ENCODE measurements at regions of chr12 and their contacts with region 1.

Region 1: GRCh38 chr12:48512855-48513254 is 12.6 kb upstream of the OR8S1 start:
- DNase-seq: peak; percentile 38
- ATAC-seq: peak; percentile 97
- H3K4me3 ChIP-seq: no peak overlapping the region
- H3K27ac ChIP-seq: no peak overlapping the region
- H3K4me1 ChIP-seq: no peaks in the 10 kb centered on the region
- H3K27me3 ChIP-seq: no peaks in the 10 kb centered on the region
- CTCF ChIP-seq: no peak
- EP300 ChIP-seq: peak in 1 of 2 experiments; percentile 71; a peak in 3 of 4 replicates
- POLR2A ChIP-seq: no peak
- RAD21 ChIP-seq: no peak

Region 2: DNA sequence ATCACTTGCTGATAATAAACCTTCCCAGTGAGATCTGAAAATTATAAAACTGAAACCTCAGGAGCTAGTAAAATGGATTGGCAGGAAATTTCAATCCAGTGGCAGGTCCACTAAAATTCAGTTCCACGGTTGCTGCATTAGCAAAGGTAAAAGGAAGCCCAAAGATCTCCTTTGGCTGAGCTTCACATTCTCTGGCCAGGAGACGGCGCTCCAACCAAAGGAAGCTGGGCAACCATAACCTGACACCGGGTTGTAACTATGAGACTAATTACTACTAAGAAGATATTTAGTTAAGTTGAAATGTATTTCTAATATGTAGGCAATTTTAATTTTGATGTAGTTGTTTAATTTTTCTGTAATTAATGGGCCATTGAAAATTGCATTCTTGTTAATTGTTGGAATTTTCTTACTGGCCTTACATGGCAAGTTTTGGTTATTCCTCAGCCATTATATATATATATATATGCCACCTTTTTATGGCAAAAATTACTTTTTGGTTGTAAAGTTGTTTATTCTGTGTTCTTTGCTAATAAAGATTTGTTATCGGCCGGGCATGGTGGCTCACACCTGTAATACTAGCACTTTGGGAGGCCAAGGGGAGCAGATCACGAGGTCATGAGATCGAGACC is 29.6 kb after region 1 on chr12:
- CTCF ChIA-PET with region 1: interaction called, 4 read pairs
- POLR2A ChIA-PET with region 1: no interaction called
- RAD21 ChIA-PET with region 1: no interaction called
- SMC1A ChIA-PET with region 1: no interaction called
- in situ Hi-C with region 1: no loop called
- intact Hi-C with region 1: loop called (anchors 2 kb)
- DNase-seq: no peak
- ATAC-seq: peak; percentile 75
- H3K4me3 ChIP-seq: no peak overlapping the region
- H3K27ac ChIP-seq: no peak overlapping the region
- H3K4me1 ChIP-seq: 0 out of 2 replicates have a peak, but pooled peaks cover 5% of the 10 kb centered on the region
- H3K27me3 ChIP-seq: no peaks in the 10 kb centered on the region
- CTCF ChIP-seq: peak; percentile 76 to 86 (median 79)
- EP300 ChIP-seq: no peak
- POLR2A ChIP-seq: no peak
- RAD21 ChIP-seq: peak; percentile 98

Region 3: DNA sequence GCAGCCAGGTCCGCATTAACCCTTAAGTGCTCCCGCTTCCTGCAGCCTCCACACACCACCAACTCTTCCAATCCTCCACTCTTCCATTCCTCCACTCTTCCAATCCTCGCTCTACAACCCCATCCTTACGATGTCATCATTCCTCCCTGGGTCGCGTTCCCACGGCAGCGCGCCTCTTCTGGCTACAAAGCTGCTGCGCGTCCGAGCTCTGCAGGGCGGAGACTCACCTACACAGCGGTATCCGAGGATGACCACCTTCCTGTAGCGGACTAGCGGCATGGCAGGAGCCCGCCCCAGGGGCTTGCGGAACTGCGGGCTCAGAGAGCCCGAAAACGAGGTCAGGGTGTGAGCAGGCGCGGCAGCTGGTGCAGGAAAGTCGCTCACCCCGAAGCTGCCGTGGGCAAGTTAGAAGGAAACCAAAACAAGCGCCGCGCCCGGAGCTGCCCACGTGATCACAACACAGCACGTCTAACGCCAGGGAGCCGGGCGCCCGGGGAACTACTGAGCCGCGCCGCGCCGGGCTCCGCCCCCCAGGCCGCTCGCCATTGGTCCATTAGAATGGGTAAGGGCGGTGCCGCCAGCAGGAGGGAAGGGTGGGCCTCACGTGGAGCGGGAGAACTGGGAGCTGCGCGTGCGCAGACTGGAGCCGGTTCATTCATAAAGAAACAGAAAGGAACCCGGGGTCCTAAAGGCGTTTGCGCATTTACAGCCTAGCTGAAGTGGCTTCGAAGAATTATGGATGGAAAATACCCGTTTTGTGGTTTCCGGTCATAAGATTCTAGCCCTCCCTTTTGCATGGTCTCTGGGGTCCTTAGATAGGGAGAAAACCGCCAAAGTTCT is 556.9 kb after region 1 on chr12 and contains the start of gene RHEBL1:
- CTCF ChIA-PET with region 1: no interaction called
- POLR2A ChIA-PET with region 1: no interaction called
- RAD21 ChIA-PET with region 1: no interaction called
- SMC1A ChIA-PET with region 1: no interaction called
- in situ Hi-C with region 1: no loop called
- intact Hi-C with region 1: no loop called
- DNase-seq: peak; percentile 94
- ATAC-seq: peak; percentile 99
- H3K4me3 ChIP-seq: peak within 1 kb of the TSS; percentile 93
- H3K27ac ChIP-seq: peak within 1 kb of the TSS; percentile 91
- H3K4me1 ChIP-seq: peaks cover 4% of the 10 kb centered on the region
- H3K27me3 ChIP-seq: no peaks in the 10 kb centered on the region
- CTCF ChIP-seq: peak; percentile 33 to 37 (median 36); a peak in 4 of 6 replicates
- EP300 ChIP-seq: peak in 1 of 2 experiments; percentile 30; a peak in 1 of 4 replicates
- POLR2A ChIP-seq: peak; percentile 79
- RAD21 ChIP-seq: no peak
- polyA plus RNA-seq, gene RHEBL1: 17.9 to 18.7 TPM